ENCODE measurements at regions of chr18 and their contacts with region 1.

Region 1: GRCh38 chr18:55861266-55861665 is 273.3 kb upstream of the TCF4 start:
- DNase-seq: peak; percentile 55
- H3K4me3 Mint-ChIP-seq: no peak overlapping the region
- H3K27ac Mint-ChIP-seq: no peak overlapping the region
- H3K4me1 Mint-ChIP-seq: peaks cover 23% of the 10 kb centered on the region
- H3K27me3 Mint-ChIP-seq: no peaks in the 10 kb centered on the region
- CTCF ChIP-seq: peak; percentile 37

Region 2: GRCh38 chr18:55343396-55344073 is 517.7 kb before region 1 on chr18:
- CTCF ChIA-PET with region 1: interaction called, 5 read pairs
- POLR2A ChIA-PET with region 1: no interaction called
- intact Hi-C with region 1: loop called (anchors 5 kb)
- DNase-seq: peak; percentile 25
- H3K4me3 Mint-ChIP-seq: no peak overlapping the region
- H3K27ac Mint-ChIP-seq: no peak overlapping the region
- H3K4me1 Mint-ChIP-seq: no peaks in the 10 kb centered on the region
- H3K27me3 Mint-ChIP-seq: no peaks in the 10 kb centered on the region
- CTCF ChIP-seq: peak; percentile 57

Region 3: GRCh38 chr18:55589625-55590291 is 271.5 kb before region 1 on chr18:
- CTCF ChIA-PET with region 1: no interaction called
- POLR2A ChIA-PET with region 1: interaction called, 14 read pairs
- intact Hi-C with region 1: loop called (anchors 2 kb)
- DNase-seq: peak; percentile 94
- H3K4me3 Mint-ChIP-seq: peak overlapping the region; percentile 88
- H3K27ac Mint-ChIP-seq: peak overlapping the region; percentile 96
- H3K4me1 Mint-ChIP-seq: peaks cover 17% of the 10 kb centered on the region
- H3K27me3 Mint-ChIP-seq: no peaks in the 10 kb centered on the region
- CTCF ChIP-seq: no peak

Region 4: DNA sequence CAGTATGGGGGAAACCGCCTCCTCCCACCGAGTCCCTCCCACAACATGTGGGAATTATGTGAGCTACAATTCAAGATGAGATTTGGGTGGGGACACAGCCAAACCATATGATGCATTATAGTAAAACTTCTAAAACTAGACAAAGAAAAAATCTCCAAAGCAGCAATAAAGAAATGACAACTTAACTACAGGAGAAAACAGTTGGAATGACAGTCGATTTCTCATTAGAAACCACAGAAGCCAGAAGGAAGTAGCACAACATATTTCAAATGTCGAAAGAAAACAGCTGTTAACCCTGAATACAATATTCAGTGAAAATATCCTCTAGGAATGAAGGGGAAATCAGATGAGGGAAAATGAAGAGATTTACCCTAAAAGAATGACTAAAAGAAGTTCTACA is 219.8 kb before region 1 on chr18:
- CTCF ChIA-PET with region 1: no interaction called
- POLR2A ChIA-PET with region 1: no interaction called
- intact Hi-C with region 1: loop called (anchors 5 kb)
- DNase-seq: no peak
- H3K4me3 Mint-ChIP-seq: no peak overlapping the region
- H3K27ac Mint-ChIP-seq: no peak overlapping the region
- H3K4me1 Mint-ChIP-seq: no peaks in the 10 kb centered on the region
- H3K27me3 Mint-ChIP-seq: no peaks in the 10 kb centered on the region
- CTCF ChIP-seq: no peak

Region 5: GRCh38 chr18:55875371-55875831 is 14.1 kb after region 1 on chr18:
- CTCF ChIA-PET with region 1: interaction called, 14 read pairs
- POLR2A ChIA-PET with region 1: no interaction called
- intact Hi-C with region 1: no loop called
- DNase-seq: no peak
- H3K4me3 Mint-ChIP-seq: no peak overlapping the region
- H3K27ac Mint-ChIP-seq: no peak overlapping the region
- H3K4me1 Mint-ChIP-seq: no peaks in the 10 kb centered on the region
- H3K27me3 Mint-ChIP-seq: no peaks in the 10 kb centered on the region
- CTCF ChIP-seq: no peak

Region 6: DNA sequence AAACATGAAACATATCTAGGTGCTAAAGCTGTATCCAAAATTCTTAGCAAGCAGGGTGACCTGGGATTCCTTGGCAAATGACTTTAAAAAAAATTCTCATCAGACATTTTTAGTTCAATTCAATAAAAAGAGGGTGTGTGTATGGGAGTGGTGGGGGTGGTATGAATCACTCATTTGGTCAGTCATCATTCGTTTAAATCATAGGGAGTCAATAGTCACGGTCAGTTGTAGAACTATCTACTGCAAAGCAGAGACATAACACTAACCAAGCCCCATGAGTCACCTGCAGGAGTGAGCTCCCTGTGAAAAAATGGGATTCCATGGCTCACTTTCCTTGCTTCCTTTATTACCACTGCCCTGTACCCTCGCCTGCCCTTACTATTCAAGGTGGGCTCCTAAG is 107.3 kb after region 1 on chr18:
- CTCF ChIA-PET with region 1: no interaction called
- POLR2A ChIA-PET with region 1: no interaction called
- intact Hi-C with region 1: no loop called
- DNase-seq: peak; percentile 23
- H3K4me3 Mint-ChIP-seq: no peak overlapping the region
- H3K27ac Mint-ChIP-seq: no peak overlapping the region
- H3K4me1 Mint-ChIP-seq: no peaks in the 10 kb centered on the region
- H3K27me3 Mint-ChIP-seq: no peaks in the 10 kb centered on the region
- CTCF ChIP-seq: no peak

Region 7: DNA sequence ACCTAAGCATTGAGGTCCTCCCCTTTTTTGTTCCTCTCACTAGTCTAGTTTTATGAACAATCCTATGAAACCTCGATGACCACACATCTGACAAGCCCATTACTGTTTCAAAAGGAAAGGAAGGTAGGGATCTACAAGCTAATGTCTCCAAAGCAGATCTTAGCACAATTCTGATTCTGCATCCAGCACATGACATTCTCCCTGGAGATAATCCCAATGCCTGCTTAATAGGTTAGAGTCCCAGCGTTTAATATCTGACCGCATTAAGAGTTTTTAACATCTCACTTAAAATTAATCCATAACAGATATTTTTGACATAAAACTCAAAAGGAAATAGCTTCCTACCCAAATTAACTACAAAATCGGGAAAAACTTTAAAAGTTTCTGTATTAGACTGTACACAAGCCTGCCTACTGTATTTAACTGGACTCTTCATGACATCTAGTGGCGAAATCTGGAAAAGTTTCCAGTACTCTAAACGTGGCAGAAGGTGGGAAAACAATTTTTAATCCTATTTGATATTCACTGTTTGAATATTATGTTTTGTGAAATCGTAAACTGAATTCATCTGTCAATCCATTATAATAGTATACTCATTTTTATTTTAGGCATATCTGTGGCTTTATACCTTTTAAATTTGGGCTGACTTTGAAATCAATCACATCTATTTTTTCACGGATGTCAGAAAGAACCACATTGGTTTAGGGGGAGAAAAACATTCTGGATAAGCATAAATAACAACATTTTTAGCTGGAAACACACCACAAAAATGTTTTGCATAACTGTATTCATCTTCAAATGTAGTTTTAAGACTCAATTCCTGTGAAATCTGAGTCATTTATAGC is 714.8 kb after region 1 on chr18:
- CTCF ChIA-PET with region 1: interaction called, 4 read pairs
- POLR2A ChIA-PET with region 1: no interaction called
- intact Hi-C with region 1: loop called (anchors 1 kb)
- DNase-seq: peak; percentile 68
- H3K4me3 Mint-ChIP-seq: no peak overlapping the region
- H3K27ac Mint-ChIP-seq: no peak overlapping the region
- H3K4me1 Mint-ChIP-seq: no peaks in the 10 kb centered on the region
- H3K27me3 Mint-ChIP-seq: no peaks in the 10 kb centered on the region
- CTCF ChIP-seq: peak; percentile 60

Measured in MCF 10A (cell line).